Common myeloid progenitor, CD34-positive (primary cell): ENCODE measurements at regions of chr5 and their contacts with region 1.

Region 1: DNA sequence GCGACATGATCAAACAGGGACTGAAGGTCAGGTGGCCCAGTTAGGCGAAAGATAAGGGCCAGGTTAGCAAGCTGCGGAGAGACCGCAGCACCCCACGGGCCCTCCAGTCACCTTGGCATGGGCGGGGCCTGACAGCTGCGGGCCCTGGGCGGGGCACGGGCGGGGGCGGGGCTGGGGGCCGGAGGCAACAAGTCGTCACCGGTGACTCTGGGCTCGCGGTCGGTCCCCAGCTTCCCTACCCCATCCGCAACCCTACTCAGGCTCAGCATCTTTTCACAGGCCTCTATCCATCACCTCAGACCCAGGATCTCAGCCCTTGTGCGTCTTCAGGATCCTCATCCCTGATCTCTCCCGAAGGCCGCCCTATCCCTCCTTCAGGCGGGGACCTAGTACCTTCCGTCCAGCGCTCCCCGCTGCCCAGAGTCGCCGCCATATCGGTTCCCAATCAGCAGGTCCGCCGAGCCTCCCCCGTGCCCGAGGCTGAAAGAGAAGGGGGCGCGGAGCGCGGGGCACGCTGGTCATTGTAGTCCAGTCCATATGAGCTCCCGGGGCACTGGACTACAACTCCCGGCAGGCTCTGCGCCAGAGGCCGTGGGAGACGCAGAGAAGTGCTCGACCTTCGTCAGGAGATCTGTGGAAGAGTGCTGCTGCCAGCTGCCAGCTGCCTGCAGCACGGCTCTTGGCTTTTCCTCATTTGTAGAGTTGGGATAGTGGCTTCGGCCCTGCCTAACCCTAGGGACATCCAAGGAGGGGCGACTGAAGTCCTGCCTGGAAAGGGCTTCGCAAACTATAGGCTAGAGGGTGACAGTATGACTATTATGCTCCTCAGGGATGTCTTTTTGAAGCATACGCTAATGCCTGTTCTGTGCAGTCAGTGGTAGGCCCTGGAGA is at the start of gene DNAJC18:
- DNase-seq: peak; percentile 86 to 91 (median 89)
- H3K4me3 ChIP-seq: peak within 1 kb of the TSS; percentile 71 to 91 (median 85)
- H3K27ac ChIP-seq: peak within 1 kb of the TSS; percentile 81 to 91
- H3K4me1 ChIP-seq: peaks cover 8 to 38% (median 33%) of the 10 kb centered on the region in 4 experiments
- H3K27me3 ChIP-seq: no peaks in the 10 kb centered on the region

Region 2: GRCh38 chr5:138542956-138543729 is 896.1 kb before region 1 on chr5 and contains the start of gene ETF1:
- CTCF ChIA-PET with region 1: no interaction called
- POLR2A ChIA-PET with region 1: no interaction called
- DNase-seq: peak; percentile 100
- H3K4me3 ChIP-seq: peak within 1 kb of the TSS; percentile 87 to 99 (median 98)
- H3K27ac ChIP-seq: peak within 1 kb of the TSS; percentile 100
- H3K4me1 ChIP-seq: peaks cover 23 to 49% (median 36%) of the 10 kb centered on the region in 4 experiments
- H3K27me3 ChIP-seq: no peaks in the 10 kb centered on the region

Region 3: DNA sequence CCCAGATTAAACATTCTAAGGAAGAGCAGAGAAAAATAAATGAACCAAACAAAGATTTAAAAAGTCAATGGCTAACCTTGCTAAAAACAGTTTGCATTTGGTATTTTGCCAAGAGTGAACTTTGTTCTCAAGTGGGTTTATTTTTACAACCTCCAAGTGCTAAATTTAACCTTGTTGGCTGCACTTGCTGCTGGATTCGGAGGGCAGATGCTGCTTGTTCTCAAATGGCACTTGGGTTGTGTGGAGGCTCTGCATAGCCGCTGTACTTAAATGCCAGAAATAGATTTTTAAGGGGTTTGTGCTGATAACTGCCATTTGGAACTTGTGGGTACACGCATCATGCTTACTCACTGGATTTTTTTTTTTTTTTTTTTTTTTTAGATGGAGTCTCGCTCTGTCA is 22.0 kb before region 1 on chr5:
- CTCF ChIA-PET with region 1: interaction called, 64 read pairs
- POLR2A ChIA-PET with region 1: interaction called, 3 read pairs
- DNase-seq: peak in 2 of 3 donors; percentile 75 to 84
- H3K4me3 ChIP-seq: peak overlapping the region in 1 of 7 experiments; percentile 38
- H3K27ac ChIP-seq: peak overlapping the region in 1 of 2 experiments; percentile 44
- H3K4me1 ChIP-seq: peaks cover 4 to 49% (median 36%) of the 10 kb centered on the region in 4 experiments
- H3K27me3 ChIP-seq: no peaks in the 10 kb centered on the region

Region 4: DNA sequence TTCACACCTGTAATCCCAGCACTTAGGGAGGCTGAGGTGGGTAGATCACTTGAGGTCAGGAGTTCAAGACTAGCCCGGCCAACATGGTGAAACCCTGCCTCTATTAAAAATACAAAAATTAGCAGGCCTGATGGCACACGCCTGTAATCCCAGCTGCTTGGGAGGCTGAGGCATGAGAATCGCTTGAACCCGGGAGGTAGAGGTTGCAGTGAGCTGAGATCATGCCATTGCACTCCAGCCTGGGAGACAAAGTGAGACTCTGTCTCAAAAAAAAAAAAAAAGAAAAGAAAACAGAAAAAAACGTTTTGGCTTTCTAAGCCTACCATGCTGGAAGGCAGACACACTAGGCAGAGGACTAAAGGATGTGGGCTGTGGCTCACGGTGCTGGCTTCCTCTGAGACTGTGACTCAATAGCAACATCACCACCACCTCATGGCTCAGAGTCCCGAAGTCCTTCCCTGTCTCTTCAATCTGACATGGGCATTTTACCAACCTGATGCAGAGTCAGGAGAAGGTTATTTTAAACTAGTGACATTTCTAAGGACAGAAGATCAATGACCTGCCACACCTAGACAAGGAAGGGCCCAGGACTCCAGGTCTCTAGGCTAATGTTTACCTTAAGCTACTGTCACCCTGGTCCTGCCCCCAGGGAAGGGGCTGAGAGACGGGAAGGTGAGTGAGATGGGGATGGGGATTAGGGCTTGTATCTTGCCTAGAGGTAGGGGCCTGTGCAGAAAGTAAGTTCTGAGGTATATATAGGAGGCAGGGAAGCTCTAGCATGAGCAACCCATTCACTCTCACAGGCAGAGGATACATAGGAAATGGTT is 19.5 kb after region 1 on chr5:
- CTCF ChIA-PET with region 1: interaction called, 12 read pairs
- POLR2A ChIA-PET with region 1: interaction called, 8 read pairs
- DNase-seq: peak; percentile 85 to 96 (median 95)
- H3K4me3 ChIP-seq: no peak overlapping the region
- H3K27ac ChIP-seq: peak overlapping the region in 1 of 2 experiments; percentile 9
- H3K4me1 ChIP-seq: peaks cover 0 to 19% (median 10%) of the 10 kb centered on the region in 4 experiments
- H3K27me3 ChIP-seq: no peaks in the 10 kb centered on the region

Region 5: GRCh38 chr5:139468421-139468931 is 29.2 kb after region 1 on chr5:
- CTCF ChIA-PET with region 1: interaction called, 11 read pairs
- POLR2A ChIA-PET with region 1: interaction called, 8 read pairs
- DNase-seq: no peak
- H3K4me3 ChIP-seq: no peak overlapping the region
- H3K27ac ChIP-seq: no peak overlapping the region
- H3K4me1 ChIP-seq: peaks cover 3 to 53% (median 48%) of the 10 kb centered on the region in 4 experiments
- H3K27me3 ChIP-seq: no peaks in the 10 kb centered on the region

Region 6: DNA sequence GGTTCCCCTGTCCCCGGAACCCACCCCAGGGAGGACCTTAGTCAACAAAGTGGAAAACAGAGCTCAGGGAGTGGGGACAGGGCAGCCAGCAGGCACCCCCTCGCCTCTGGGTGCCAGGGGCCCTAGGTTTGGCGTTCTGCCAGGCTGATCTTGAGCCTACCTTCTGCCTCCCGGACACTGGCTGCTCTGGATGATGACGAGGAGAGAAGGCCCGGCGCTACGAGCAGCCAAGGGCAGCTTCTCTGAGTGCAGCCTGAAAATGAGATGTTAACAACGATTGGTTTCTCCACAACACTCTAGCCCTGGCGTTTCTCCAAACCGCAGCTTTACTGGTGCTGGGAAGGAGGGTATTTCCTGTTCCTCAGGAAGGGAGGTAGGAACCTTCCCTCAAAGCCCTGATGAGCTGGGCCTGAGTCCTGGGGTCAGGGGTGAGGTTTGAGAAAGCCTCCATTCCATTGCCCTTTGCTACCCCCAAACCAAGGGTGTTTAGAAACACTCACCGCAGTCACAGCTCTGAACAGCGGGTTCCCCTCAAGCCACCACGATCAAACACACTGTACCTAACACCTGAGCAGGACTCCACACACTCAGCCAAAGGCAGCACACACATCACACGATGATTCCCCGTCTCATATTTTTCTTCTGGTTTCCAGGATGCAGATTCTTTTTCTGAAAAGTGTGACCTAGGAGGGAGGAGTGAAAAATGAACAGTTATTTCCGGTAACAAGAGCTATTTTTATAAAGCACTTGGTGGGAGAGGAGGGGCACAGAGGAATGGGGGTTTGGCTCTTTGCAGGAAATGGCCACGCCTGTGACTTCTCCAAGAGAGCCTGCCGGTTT is 43.0 kb after region 1 on chr5 and contains the start of gene STING1:
- CTCF ChIA-PET with region 1: interaction called, 11 read pairs
- POLR2A ChIA-PET with region 1: interaction called, 15 read pairs
- DNase-seq: peak; percentile 86 to 93 (median 92)
- H3K4me3 ChIP-seq: peak within 1 kb of the TSS; percentile 40 to 89 (median 79)
- H3K27ac ChIP-seq: peak within 1 kb of the TSS; percentile 81 to 91
- H3K4me1 ChIP-seq: peaks cover 12 to 71% (median 59%) of the 10 kb centered on the region in 4 experiments
- H3K27me3 ChIP-seq: no peaks in the 10 kb centered on the region

Region 7: DNA sequence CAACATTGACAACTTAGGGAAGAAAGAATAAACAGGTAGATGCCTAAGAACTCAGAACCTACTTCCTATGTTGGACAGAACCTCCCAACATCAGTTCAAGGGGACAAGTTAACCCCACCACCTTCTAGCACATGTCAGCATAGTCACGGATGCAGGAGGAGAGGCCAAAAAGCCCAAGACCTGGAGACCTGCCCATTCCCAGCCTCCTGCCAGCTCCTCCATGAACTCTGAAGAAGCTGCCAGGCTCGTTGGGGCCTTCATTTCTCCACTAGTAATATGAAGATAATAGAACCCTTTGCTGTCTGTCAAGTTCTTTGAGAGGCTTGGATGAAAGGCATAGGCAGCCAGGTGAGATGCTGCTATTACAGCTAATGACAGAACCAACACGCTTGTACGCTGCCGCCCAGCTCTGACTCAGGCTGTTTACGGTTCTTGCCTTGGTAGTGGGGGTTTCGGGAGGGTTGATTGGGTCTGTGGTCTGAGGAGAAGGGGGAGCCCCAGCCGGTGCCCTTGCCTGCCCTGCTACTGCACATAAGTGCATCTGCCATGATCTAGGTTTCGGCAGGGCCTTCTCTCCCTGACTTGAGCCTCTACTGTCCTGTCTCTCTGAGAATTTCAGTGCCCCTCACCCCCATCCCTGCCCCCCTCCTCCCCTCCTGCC is 521.6 kb after region 1 on chr5:
- CTCF ChIA-PET with region 1: no interaction called
- POLR2A ChIA-PET with region 1: no interaction called
- DNase-seq: no peak
- H3K4me3 ChIP-seq: no peak overlapping the region
- H3K27ac ChIP-seq: no peak overlapping the region
- H3K4me1 ChIP-seq: no peaks in the 10 kb centered on the region
- H3K27me3 ChIP-seq: peaks cover 0 to 22% (median 3%) of the 10 kb centered on the region in 5 experiments